A549 (cell line): ENCODE measurements at regions of chr15 and their contacts with region 1.

Region 1: GRCh38 chr15:65980824-65981456 is 111.6 kb downstream of the RAB11A start:
- DNase-seq: peak; percentile 76 to 95
- ATAC-seq: peak; percentile 70 to 89
- H3K4me3 ChIP-seq: no peak overlapping the region
- H3K27ac ChIP-seq: no peak overlapping the region
- H3K4me1 ChIP-seq: no peaks in the 10 kb centered on the region; the same call in 2 of the 3 replicates
- CTCF ChIP-seq: peak; percentile 74
- EP300 ChIP-seq: no peak
- POLR2A ChIP-seq: no peak
- RAD21 ChIP-seq: peak; percentile 73 to 87

Region 2: DNA sequence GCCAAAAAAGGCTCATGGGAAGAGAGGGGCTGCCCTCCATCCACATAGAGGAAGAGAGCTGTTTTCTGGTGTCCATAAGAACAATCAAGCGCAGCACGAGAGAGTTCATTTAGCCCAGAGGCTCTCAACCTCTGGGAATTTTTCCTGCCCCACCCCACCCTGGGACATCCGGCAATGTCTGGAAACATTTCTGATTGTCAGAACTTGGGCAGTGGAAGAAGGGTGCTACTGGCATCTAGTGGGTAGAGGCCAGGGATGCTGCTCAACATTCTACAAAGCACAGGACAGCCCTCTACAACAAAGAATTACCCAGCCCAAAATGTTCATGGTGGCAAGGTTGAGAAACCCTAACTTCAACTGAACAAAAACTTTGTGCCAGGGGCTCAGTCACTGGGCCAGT is 18.8 kb before region 1 on chr15:
- CTCF ChIA-PET with region 1: interaction called, 13 read pairs
- POLR2A ChIA-PET with region 1: no interaction called
- DNase-seq: peak in 1 of 2 experiments; percentile 30
- ATAC-seq: peak in 1 of 2 experiments; percentile 41; a peak in 2 of 6 replicates
- H3K4me3 ChIP-seq: no peak overlapping the region
- H3K27ac ChIP-seq: no peak overlapping the region
- H3K4me1 ChIP-seq: no peaks in the 10 kb centered on the region
- CTCF ChIP-seq: peak; percentile 34
- EP300 ChIP-seq: no peak
- POLR2A ChIP-seq: no peak
- RAD21 ChIP-seq: peak; percentile 37 to 46; a peak in 4 of 5 replicates

Region 3: DNA sequence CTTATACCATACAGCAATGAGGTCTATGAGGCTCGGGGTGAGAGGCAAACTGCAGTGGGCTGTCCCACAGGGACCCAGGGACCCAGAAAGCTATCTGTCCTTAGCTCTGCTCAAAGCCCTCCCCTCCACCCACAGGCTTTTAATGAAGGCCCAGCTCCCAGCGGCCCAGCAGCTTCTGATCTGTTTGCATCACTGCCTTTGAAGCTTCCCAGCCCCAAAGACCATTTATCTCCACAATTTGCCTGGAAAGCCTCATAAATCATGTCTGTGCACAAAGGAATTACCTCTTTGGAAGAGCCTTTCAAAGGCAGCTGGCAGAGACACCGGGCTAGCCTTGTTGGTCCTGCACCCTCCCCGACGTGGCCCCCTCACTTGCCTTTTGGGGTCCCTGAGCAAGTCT is 12.3 kb after region 1 on chr15:
- CTCF ChIA-PET with region 1: interaction called, 50 read pairs
- POLR2A ChIA-PET with region 1: no interaction called
- DNase-seq: no peak
- ATAC-seq: no peak
- H3K4me3 ChIP-seq: no peak overlapping the region
- H3K27ac ChIP-seq: no peak overlapping the region
- H3K4me1 ChIP-seq: no peaks in the 10 kb centered on the region
- CTCF ChIP-seq: no peak
- EP300 ChIP-seq: no peak
- POLR2A ChIP-seq: no peak
- RAD21 ChIP-seq: no peak

Region 4: GRCh38 chr15:66001717-66002426 is 20.9 kb after region 1 on chr15:
- CTCF ChIA-PET with region 1: interaction called, 50 read pairs
- POLR2A ChIA-PET with region 1: no interaction called
- DNase-seq: no peak
- ATAC-seq: no peak
- H3K4me3 ChIP-seq: no peak overlapping the region
- H3K27ac ChIP-seq: no peak overlapping the region
- H3K4me1 ChIP-seq: peaks cover 9% of the 10 kb centered on the region
- CTCF ChIP-seq: no peak
- EP300 ChIP-seq: no peak
- POLR2A ChIP-seq: no peak
- RAD21 ChIP-seq: no peak

Region 5: GRCh38 chr15:66193066-66193465 is 212.1 kb after region 1 on chr15:
- CTCF ChIA-PET with region 1: interaction called, 10 read pairs
- POLR2A ChIA-PET with region 1: no interaction called
- DNase-seq: no peak
- ATAC-seq: no peak
- H3K4me3 ChIP-seq: no peak overlapping the region
- H3K27ac ChIP-seq: no peak overlapping the region
- H3K4me1 ChIP-seq: no peaks in the 10 kb centered on the region
- CTCF ChIP-seq: no peak
- EP300 ChIP-seq: no peak
- POLR2A ChIP-seq: no peak
- RAD21 ChIP-seq: no peak

Region 6: GRCh38 chr15:66287461-66288057 is 306.6 kb after region 1 on chr15:
- CTCF ChIA-PET with region 1: interaction called, 25 read pairs
- POLR2A ChIA-PET with region 1: no interaction called
- DNase-seq: peak; percentile 27 to 37
- ATAC-seq: peak; percentile 56 to 69; a peak in 3 of 6 replicates
- H3K4me3 ChIP-seq: no peak overlapping the region
- H3K27ac ChIP-seq: no peak overlapping the region
- H3K4me1 ChIP-seq: peaks cover 13% of the 10 kb centered on the region
- CTCF ChIP-seq: peak; percentile 85
- EP300 ChIP-seq: no peak
- POLR2A ChIP-seq: no peak
- RAD21 ChIP-seq: peak; percentile 65 to 72

Region 7: GRCh38 chr15:66293419-66294156 is 312.6 kb after region 1 on chr15 and contains the start of gene DIS3L:
- CTCF ChIA-PET with region 1: interaction called, 25 read pairs
- POLR2A ChIA-PET with region 1: no interaction called
- DNase-seq: peak; percentile 81 to 82
- ATAC-seq: peak; percentile 89 to 90
- H3K4me3 ChIP-seq: peak within 1 kb of the TSS; percentile 51
- H3K27ac ChIP-seq: peak within 1 kb of the TSS; percentile 95
- H3K4me1 ChIP-seq: peaks cover 21% of the 10 kb centered on the region
- CTCF ChIP-seq: no peak
- EP300 ChIP-seq: no peak; a peak in 1 of 5 replicates
- POLR2A ChIP-seq: peak; percentile 84
- RAD21 ChIP-seq: no peak
- polyA plus RNA-seq, gene DIS3L: 64.3 and 74.9 TPM in 2 replicates